CD8-positive, alpha-beta T cell (primary cell): ENCODE measurements at regions of chr11 and their contacts with region 1.

Region 1: GRCh38 chr11:30987819-30988218 is 381.7 kb downstream of the DCDC1 start:
- DNase-seq: no peak
- ATAC-seq: no peak
- H3K4me3 ChIP-seq: no peak overlapping the region
- H3K4me3 Mint-ChIP-seq: no peak overlapping the region
- H3K27ac ChIP-seq: no peak overlapping the region
- H3K27ac Mint-ChIP-seq: no peak overlapping the region
- H3K4me1 ChIP-seq: no peaks in the 10 kb centered on the region
- H3K4me1 Mint-ChIP-seq: no peaks in the 10 kb centered on the region
- H3K27me3 ChIP-seq: no peaks in the 10 kb centered on the region
- H3K27me3 Mint-ChIP-seq: no peaks in the 10 kb centered on the region
- CTCF ChIP-seq: no peak

Region 2: DNA sequence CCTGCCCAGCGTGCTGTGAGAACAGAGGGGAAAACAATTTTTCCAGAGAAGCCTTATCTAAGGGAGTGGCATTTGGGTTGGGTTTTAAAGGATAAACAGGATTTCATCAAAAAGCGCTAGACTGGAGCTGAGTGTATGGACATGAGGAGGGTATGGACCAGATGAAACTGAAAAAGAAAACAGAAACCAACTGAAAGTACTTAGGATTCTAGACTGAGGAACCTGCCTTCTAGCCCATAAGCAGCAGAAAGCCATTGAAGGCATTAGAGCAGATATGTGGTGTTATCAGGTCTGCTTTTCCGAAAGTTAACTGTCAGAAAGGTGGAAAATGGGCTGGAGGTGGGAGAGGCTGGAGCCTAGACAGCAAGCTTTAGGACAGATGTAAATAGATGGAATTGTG is 61.7 kb before region 1 on chr11:
- CTCF ChIA-PET with region 1: no interaction called
- POLR2A ChIA-PET with region 1: no interaction called
- intact Hi-C with region 1: loop called in 1 of 2 experiments (anchors 2 kb)
- DNase-seq: no peak
- ATAC-seq: no peak
- H3K4me3 ChIP-seq: no peak overlapping the region
- H3K4me3 Mint-ChIP-seq: no peak overlapping the region
- H3K27ac ChIP-seq: no peak overlapping the region
- H3K27ac Mint-ChIP-seq: no peak overlapping the region
- H3K4me1 ChIP-seq: no peaks in the 10 kb centered on the region
- H3K4me1 Mint-ChIP-seq: no peaks in the 10 kb centered on the region
- H3K27me3 ChIP-seq: no peaks in the 10 kb centered on the region
- H3K27me3 Mint-ChIP-seq: no peaks in the 10 kb centered on the region
- CTCF ChIP-seq: no peak